ENCODE measurements at regions of chr18 and their contacts with region 1.

Region 1: GRCh38 chr18:61893971-61894750 is 1.4 kb upstream of the RNF152 start:
- DNase-seq: peak; percentile 62
- ATAC-seq: peak; percentile 89
- H3K4me3 ChIP-seq: peak overlapping the region; percentile 74
- H3K27ac ChIP-seq: no peak overlapping the region
- H3K4me1 ChIP-seq: peaks cover 12% of the 10 kb centered on the region
- H3K27me3 ChIP-seq: no peaks in the 10 kb centered on the region
- CTCF ChIP-seq: no peak

Region 2: GRCh38 chr18:61581578-61582201 is 312.5 kb before region 1 on chr18:
- CTCF ChIA-PET with region 1: no interaction called
- POLR2A ChIA-PET with region 1: no interaction called
- intact Hi-C with region 1: loop called (anchors 10 kb)
- DNase-seq: peak; percentile 61
- ATAC-seq: peak; percentile 93
- H3K4me3 ChIP-seq: peak overlapping the region; percentile 58
- H3K27ac ChIP-seq: no peak overlapping the region
- H3K4me1 ChIP-seq: peaks cover 3% of the 10 kb centered on the region; the same call in 1 of the 2 replicates
- H3K27me3 ChIP-seq: peaks cover under 1% of the 10 kb centered on the region; the same call in 1 of the 2 replicates
- CTCF ChIP-seq: peak; percentile 92

Region 3: GRCh38 chr18:61992285-61992684 is 98.1 kb after region 1 on chr18:
- CTCF ChIA-PET with region 1: no interaction called
- POLR2A ChIA-PET with region 1: no interaction called
- intact Hi-C with region 1: no loop called
- DNase-seq: peak; percentile 86
- ATAC-seq: peak; percentile 90
- H3K4me3 ChIP-seq: peak overlapping the region; percentile 10; the same call in 1 of the 2 replicates
- H3K27ac ChIP-seq: peak overlapping the region; percentile 70
- H3K4me1 ChIP-seq: peaks cover 25% of the 10 kb centered on the region
- H3K27me3 ChIP-seq: no peaks in the 10 kb centered on the region
- CTCF ChIP-seq: no peak

Measured in PC-3 (cell line).